ENCODE measurements at regions of chr19 and their contacts with region 1.

Region 1: DNA sequence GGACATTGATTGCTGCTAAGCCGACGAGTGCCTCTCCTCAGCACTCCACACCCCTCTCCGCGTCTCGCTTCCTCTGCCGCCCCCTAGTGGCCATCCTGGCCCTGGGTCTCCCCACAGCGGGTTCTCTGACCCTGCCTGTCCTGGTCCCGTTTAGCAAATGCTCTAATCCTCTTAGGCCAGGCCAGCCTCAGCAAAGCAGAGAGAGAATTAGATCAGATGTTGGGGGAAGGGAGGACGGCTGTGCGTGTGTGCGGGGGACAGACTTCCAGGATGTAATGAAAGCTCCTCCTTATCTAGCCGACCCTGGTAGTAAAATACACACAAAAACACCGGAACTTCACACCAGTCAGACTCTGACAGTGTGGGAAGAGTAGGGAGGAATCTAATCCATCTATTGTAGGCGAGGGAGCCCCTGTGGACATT is 4.5 kb downstream of the TPRX2 start:
- DNase-seq: peak; percentile 80 to 91 (median 81)
- ATAC-seq: peak; percentile 87 to 96 (median 91)
- H3K4me3 ChIP-seq: no peak overlapping the region
- H3K27ac ChIP-seq: no peak overlapping the region
- H3K4me1 ChIP-seq: no peaks in the 10 kb centered on the region
- H3K27me3 ChIP-seq: peaks cover 0 to 15% (median 0%) of the 10 kb centered on the region in 9 donors
- CTCF ChIP-seq: peak; percentile 87 to 97 (median 94)
- POLR2A ChIP-seq: no peak

Region 2: DNA sequence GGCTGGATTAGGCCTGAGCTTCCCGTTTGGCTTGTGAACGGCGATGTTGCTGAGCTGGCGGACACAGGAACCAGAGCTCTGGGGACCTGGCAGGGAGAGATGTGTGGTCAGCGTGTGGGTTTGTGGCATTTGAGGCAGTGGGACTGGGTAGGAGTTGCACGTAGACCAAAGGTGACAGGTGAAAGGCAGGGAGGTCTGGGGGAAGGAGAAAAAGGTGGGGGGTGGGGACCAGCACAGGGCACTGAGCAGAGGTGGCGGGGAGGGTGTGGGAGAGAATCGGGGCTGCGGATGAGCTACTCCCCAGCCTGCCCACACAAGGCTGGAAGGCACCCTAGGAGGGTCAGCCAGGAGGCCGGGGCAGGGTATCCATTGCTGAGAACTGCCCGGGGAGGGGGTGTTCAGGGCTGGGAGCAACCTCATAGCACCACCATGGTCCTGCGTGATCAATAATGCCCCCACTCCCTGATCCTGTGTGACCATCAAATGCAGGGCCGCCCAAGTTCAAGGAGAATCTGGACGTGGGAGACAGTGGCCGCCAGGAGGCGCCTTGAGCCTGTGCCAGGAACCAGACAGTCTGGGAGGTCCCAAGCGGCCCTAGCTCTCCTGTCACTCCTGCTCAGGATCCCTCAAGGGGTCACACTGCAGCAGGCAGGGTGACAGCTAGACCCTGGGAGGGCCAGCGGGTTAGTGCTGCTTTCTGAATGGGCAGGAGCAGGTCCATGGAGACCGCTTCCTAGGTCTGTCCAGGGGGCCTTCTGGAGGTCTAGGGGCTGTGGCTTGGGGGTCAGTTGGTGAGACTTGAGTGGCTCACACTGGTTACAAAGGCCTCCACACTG is 97.8 kb before region 1 on chr19:
- intact Hi-C with region 1: loop called in 3 of 10 experiments (anchors 1 to 10 kb)
- DNase-seq: peak; percentile 67 to 87 (median 76)
- ATAC-seq: peak; percentile 69 to 75 (median 74)
- H3K4me3 ChIP-seq: no peak overlapping the region
- H3K27ac ChIP-seq: no peak overlapping the region
- H3K4me1 ChIP-seq: peaks cover 0 to 19% (median 3%) of the 10 kb centered on the region in 12 donors
- H3K27me3 ChIP-seq: no peaks in the 10 kb centered on the region
- CTCF ChIP-seq: peak; percentile 72 to 89 (median 82)
- POLR2A ChIP-seq: no peak

Region 3: DNA sequence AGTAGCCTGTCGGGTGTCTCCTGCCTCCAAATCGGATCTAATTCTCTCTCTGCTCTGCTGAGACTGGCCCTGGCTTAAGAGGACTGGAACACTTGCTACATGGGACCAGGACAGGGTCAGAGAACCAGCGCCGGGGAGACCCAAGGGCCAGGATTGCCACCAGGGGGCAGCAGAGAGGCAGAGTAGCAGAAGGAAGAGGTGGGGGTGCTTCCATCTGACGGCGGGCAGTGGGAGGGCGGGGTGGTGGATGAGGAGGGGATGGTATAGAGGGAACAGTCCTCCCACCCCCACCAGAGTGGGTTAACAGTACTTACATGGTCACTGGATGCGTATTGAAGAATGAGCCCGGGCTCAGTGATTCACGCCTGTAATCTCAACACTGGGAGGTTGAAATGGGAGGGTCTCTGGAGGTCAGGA is 73.1 kb before region 1 on chr19:
- intact Hi-C with region 1: loop called in 3 of 10 experiments (anchors 1 to 5 kb)
- DNase-seq: peak; percentile 79 to 91 (median 85)
- ATAC-seq: peak; percentile 47 to 78 (median 68)
- H3K4me3 ChIP-seq: no peak overlapping the region
- H3K27ac ChIP-seq: no peak overlapping the region
- H3K4me1 ChIP-seq: peaks cover 0 to 12% (median 4%) of the 10 kb centered on the region in 12 donors
- H3K27me3 ChIP-seq: no peaks in the 10 kb centered on the region
- CTCF ChIP-seq: peak; percentile 68 to 83 (median 80)
- POLR2A ChIP-seq: no peak

Region 4: DNA sequence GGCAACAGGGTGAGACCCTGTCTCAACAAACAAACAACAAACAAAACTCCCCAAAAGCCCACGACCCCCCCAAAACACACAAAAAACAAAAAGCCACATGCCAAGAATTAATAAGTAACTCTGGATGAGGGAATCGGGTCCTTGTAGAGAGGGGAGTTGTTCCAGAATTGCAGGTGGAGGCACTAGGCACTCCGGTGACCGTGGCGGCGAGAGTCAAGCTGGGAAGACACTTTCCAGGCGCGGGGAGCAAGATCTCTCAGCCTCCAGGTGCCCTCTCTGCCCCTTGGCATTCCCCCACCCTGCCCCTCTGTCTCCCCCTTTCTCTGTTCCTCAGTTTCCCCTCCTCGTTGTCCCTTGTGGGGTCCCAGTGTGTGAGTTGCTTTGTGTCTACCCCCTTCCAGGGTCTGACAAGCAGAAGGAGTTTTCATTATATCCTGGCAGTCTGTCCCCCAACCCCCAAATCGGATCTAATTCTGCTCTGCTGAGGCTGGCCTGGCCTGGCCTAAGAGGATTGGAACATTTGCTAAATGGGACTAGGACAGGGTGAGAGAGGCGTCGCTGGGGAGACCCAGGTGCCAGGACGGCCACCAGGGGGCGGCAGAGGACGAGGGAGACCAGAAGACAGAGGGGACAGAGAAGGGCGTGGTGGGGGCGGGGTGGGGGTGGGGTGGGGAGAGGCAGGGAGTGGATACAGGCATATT is 50.1 kb before region 1 on chr19:
- intact Hi-C with region 1: loop called in 1 of 10 experiments (anchors 5 kb)
- DNase-seq: peak; percentile 54 to 88 (median 69)
- ATAC-seq: peak; percentile 32 to 80 (median 62)
- H3K4me3 ChIP-seq: no peak overlapping the region
- H3K27ac ChIP-seq: no peak overlapping the region
- H3K4me1 ChIP-seq: no peaks in the 10 kb centered on the region
- H3K27me3 ChIP-seq: peaks cover 0 to 13% (median 0%) of the 10 kb centered on the region in 9 donors
- CTCF ChIP-seq: peak; percentile 40 to 61 (median 54)
- POLR2A ChIP-seq: no peak

Region 5: DNA sequence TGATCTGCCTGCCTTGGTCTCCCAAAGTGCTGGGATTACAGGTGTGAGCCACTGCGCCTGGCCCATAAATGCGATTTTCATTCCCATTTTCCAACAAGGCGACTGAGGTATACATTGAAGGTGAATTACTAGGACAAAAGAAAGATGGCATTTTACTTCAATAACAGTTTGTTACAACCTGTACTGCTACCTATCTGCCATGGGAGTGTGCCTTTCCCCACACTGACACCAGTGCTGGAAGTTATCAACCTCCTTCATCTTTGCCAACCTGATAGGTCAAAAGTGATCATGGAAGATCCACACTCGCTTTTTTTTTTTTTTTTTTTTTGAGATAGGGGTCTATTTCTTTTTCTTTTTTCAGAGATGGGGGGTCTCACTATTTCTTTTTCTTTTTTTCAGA is 30.8 kb before region 1 on chr19:
- intact Hi-C with region 1: no loop called
- DNase-seq: no peak
- ATAC-seq: no peak
- H3K4me3 ChIP-seq: no peak overlapping the region
- H3K27ac ChIP-seq: no peak overlapping the region
- H3K4me1 ChIP-seq: no peaks in the 10 kb centered on the region
- H3K27me3 ChIP-seq: peaks cover 0 to 7% (median 0%) of the 10 kb centered on the region in 9 donors
- CTCF ChIP-seq: no peak
- POLR2A ChIP-seq: no peak